B cell (primary cell): ENCODE measurements at regions of chr2 and their contacts with region 1.

Region 1: DNA sequence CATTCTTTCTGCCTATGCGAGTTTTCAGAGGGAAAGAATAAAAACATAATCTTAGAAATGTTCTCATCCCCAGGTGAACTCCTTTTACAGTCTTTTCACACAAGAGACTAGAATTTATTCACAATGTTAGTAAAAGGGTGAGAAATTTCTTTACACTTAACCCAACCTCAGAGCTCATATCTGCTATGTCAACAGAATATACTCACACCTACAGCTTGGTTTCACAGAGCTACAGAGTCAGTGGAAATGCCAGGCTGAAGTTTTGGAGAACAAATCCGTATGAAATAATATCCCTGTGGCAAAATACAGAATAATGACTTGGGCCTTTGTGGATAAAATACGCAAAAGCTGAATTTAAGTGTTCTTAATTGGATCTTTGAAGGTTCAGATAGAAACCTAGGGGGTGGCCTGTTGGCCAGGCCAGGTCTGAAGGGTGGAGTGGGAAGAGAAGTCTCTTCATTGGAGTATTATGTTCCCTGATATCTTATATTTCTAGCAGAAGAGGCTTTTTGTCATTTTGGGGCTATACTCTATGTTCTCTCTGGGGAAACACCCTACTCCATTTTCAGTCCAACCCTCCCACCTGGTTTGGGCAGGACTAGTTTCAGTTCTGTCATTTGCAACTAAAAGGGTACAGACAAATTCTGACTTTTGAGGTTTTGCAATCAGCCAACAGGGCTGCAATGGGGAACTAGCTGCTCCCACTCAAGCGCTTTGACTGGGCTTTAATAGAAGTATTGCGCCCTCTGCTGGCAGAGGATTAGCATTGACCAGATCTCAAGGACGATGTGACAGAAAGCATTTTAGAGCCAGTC is 25.7 kb downstream of the FBXO48 start:
- DNase-seq: peak; percentile 97
- ATAC-seq: peak; percentile 98
- H3K4me3 ChIP-seq: peak overlapping the region in 1 of 5 experiments; percentile 45
- H3K4me3 Mint-ChIP-seq: peak overlapping the region; percentile 77
- H3K27ac ChIP-seq: peak overlapping the region; percentile 75 to 90
- H3K27ac Mint-ChIP-seq: peak overlapping the region; percentile 95
- H3K4me1 ChIP-seq: peaks cover 33 to 39% of the 10 kb centered on the region in 2 donors
- H3K4me1 Mint-ChIP-seq: peaks cover 46% of the 10 kb centered on the region
- H3K27me3 ChIP-seq: no peaks in the 10 kb centered on the region
- H3K27me3 Mint-ChIP-seq: no peaks in the 10 kb centered on the region
- CTCF ChIP-seq: peak; percentile 97

Region 2: DNA sequence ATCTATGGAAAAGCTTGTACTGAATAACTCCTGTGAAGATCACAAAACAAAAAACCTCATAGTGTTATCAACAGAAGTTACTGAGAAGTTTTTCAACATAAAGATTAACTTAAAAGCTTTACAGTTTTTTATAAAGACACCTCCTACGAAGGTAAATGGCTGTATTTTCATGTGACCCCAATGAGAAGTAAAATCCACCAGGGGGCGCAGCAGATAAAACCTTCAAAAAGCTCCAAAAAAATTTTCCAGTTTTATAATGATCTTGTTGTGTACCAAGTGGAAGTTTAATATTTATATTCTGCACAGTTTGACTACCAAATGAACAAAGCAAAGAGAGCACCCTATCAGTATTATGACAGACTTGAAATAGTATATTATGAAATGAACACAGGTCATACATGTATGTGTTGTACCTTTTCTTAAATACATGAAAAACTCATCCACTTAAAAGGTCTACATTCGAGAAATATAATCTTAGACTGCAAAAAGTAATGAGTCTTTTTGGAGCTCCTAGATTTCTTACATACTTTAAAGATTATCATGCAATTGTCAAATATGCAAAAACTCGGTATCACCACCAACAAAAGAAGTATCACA is 245.2 kb before region 1 on chr2:
- CTCF ChIA-PET with region 1: interaction called, 63 read pairs
- POLR2A ChIA-PET with region 1: no interaction called
- intact Hi-C with region 1: loop called (anchors 1 kb)
- DNase-seq: peak; percentile 66
- ATAC-seq: peak; percentile 41
- H3K4me3 ChIP-seq: no peak overlapping the region
- H3K4me3 Mint-ChIP-seq: no peak overlapping the region
- H3K27ac ChIP-seq: peak overlapping the region in 1 of 2 donors; percentile 39
- H3K27ac Mint-ChIP-seq: no peak overlapping the region
- H3K4me1 ChIP-seq: peaks cover 3 to 24% of the 10 kb centered on the region in 2 donors
- H3K4me1 Mint-ChIP-seq: peaks cover 56% of the 10 kb centered on the region
- H3K27me3 ChIP-seq: no peaks in the 10 kb centered on the region
- H3K27me3 Mint-ChIP-seq: no peaks in the 10 kb centered on the region
- CTCF ChIP-seq: peak; percentile 95

Region 3: GRCh38 chr2:68282811-68283418 is 158.5 kb before region 1 on chr2:
- CTCF ChIA-PET with region 1: interaction called, 56 read pairs
- POLR2A ChIA-PET with region 1: no interaction called
- intact Hi-C with region 1: loop called (anchors 5 kb)
- DNase-seq: peak; percentile 57
- ATAC-seq: peak; percentile 53
- H3K4me3 ChIP-seq: no peak overlapping the region
- H3K4me3 Mint-ChIP-seq: no peak overlapping the region
- H3K27ac ChIP-seq: no peak overlapping the region
- H3K27ac Mint-ChIP-seq: no peak overlapping the region
- H3K4me1 ChIP-seq: peaks cover 0 to 3% of the 10 kb centered on the region in 2 donors
- H3K4me1 Mint-ChIP-seq: peaks cover 4% of the 10 kb centered on the region
- H3K27me3 ChIP-seq: no peaks in the 10 kb centered on the region
- H3K27me3 Mint-ChIP-seq: no peaks in the 10 kb centered on the region
- CTCF ChIP-seq: peak; percentile 88

Region 4: GRCh38 chr2:68371581-68371980 is 69.8 kb before region 1 on chr2:
- CTCF ChIA-PET with region 1: interaction called, 163 read pairs
- POLR2A ChIA-PET with region 1: interaction called, 7 read pairs
- intact Hi-C with region 1: no loop called
- DNase-seq: no peak
- ATAC-seq: no peak
- H3K4me3 ChIP-seq: peak overlapping the region in 1 of 5 experiments; percentile 17
- H3K4me3 Mint-ChIP-seq: peak overlapping the region; percentile 65
- H3K27ac ChIP-seq: peak overlapping the region in 1 of 2 donors; percentile 52
- H3K27ac Mint-ChIP-seq: peak overlapping the region; percentile 77
- H3K4me1 ChIP-seq: peaks cover 72 to 81% of the 10 kb centered on the region in 2 donors
- H3K4me1 Mint-ChIP-seq: peaks cover 81% of the 10 kb centered on the region
- H3K27me3 ChIP-seq: no peaks in the 10 kb centered on the region
- H3K27me3 Mint-ChIP-seq: no peaks in the 10 kb centered on the region
- CTCF ChIP-seq: no peak

Region 5: DNA sequence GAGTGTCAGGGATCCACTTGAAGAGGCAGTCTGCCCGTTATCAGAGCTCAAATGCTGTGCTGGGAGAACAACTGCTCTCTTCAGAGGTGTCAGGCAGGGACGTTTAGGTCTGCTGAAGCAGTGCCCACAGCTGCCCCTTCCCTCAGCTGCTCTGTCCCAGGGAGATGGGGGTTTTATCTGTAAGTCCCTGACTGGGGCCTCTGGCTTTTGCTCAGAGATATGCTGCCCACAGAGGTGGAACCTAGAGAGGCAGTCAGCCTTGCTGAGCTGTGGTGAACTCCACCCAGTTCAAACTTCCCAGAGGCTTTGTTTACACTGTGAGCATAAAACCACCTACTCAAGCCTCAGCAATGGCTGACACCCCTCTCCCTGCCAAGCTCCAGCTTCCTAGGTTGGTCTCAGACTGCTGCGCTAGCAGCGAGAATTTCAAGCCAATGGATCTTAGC is 38.2 kb before region 1 on chr2:
- CTCF ChIA-PET with region 1: interaction called, 23 read pairs
- POLR2A ChIA-PET with region 1: no interaction called
- intact Hi-C with region 1: loop called (anchors 5 kb)
- DNase-seq: peak; percentile 73
- ATAC-seq: peak; percentile 81
- H3K4me3 ChIP-seq: peak overlapping the region in 1 of 5 experiments; percentile 38
- H3K4me3 Mint-ChIP-seq: peak overlapping the region; percentile 70
- H3K27ac ChIP-seq: peak overlapping the region; percentile 76 to 86
- H3K27ac Mint-ChIP-seq: peak overlapping the region; percentile 95
- H3K4me1 ChIP-seq: peaks cover 37 to 48% of the 10 kb centered on the region in 2 donors
- H3K4me1 Mint-ChIP-seq: peaks cover 88% of the 10 kb centered on the region
- H3K27me3 ChIP-seq: no peaks in the 10 kb centered on the region
- H3K27me3 Mint-ChIP-seq: no peaks in the 10 kb centered on the region
- CTCF ChIP-seq: no peak

Region 6: DNA sequence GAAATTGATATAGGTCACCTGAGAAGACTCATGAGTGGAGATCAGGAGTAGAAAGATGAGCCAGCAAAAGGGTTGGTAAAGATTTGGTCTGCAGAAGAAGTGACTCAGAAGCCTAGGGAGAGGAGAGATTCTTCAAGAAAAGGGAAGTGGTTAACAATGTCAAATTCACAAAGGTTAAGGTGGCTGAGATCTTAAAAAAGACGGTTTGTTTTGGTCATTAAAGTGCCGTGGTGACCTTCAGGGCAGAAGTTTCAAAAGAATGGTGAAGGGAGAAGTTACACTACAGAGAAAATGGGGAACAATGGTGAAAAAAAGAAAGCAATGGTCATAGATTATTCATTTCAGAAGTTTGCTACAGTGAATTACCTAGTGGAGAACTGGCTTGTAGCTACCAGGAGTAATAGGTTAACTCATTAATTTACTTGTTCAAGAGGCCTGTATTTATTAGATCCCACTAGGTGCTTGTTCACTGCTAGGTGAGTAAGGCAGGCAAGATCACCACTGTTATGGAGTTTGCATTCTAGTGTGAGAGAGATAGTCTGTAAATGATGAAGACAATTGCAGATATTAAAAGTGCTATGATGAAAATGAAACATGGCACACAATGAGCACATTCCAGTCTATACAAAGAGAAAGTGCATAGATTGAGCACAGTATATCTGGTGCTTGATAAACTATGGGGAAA is 17.3 kb before region 1 on chr2:
- CTCF ChIA-PET with region 1: interaction called, 39 read pairs
- POLR2A ChIA-PET with region 1: interaction called, 4 read pairs
- intact Hi-C with region 1: loop called (anchors 1 kb)
- DNase-seq: peak; percentile 74
- ATAC-seq: peak; percentile 81
- H3K4me3 ChIP-seq: peak overlapping the region in 2 of 5 experiments; percentile 3 to 29
- H3K4me3 Mint-ChIP-seq: no peak overlapping the region
- H3K27ac ChIP-seq: peak overlapping the region; percentile 37 to 54
- H3K27ac Mint-ChIP-seq: no peak overlapping the region
- H3K4me1 ChIP-seq: peaks cover 78 to 82% of the 10 kb centered on the region in 2 donors
- H3K4me1 Mint-ChIP-seq: peaks cover 57% of the 10 kb centered on the region
- H3K27me3 ChIP-seq: no peaks in the 10 kb centered on the region
- H3K27me3 Mint-ChIP-seq: no peaks in the 10 kb centered on the region
- CTCF ChIP-seq: no peak